ENCODE measurements at regions of chr1 and their contacts with region 1.

Region 1: DNA sequence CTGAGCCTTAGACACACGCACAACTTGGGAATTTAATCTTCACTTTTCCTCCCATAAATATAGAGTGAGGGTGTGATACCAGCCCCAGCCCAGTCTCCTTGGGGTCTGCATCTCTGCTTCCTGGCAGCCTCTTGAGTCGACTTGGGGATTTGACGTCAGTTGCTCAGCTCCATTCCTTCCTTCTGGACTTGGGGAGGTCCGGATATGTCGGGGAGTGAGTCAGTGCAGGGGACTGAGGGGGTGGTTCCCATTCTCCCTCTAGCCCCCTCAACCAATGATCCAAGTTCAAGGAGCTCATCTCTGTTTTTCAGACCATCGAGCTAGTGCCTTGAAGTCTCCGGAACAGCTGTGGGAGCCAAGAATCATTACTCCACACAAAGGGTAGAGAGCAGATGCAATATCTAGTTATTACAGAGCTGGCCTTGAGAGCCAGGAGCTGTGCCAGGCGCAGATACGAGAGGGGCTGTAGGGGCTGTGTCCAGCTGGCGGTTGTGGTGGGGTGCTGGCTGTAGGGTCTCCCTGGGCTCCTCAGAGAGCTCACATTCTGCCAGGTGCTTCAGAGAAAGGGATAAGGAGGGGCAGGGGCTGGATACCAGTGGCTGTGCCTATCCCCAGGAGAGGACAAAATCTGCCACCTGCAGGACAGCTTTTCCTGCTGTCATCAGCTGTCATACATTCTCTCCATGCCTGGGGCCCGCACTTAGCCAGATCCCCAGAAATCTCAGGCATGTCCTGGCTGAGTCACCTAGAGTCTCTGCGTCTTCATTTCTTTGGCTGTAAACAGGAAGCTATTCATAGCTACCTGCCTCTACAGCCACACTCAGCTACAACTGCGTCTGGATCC is 2.1 kb upstream of the KISS1 start:
- DNase-seq: peak; percentile 26 to 60 (median 42)
- H3K4me3 ChIP-seq: no peak overlapping the region
- H3K27ac ChIP-seq: peak overlapping the region in 1 of 2 donors; percentile 60
- H3K4me1 ChIP-seq: peaks cover 7% of the 10 kb centered on the region
- H3K27me3 ChIP-seq: no peaks in the 10 kb centered on the region
- CTCF ChIP-seq: no peak
- EP300 ChIP-seq: no peak
- POLR2A ChIP-seq: no peak

Region 2: GRCh38 chr1:204149635-204150565 is 48.5 kb before region 1 on chr1:
- intact Hi-C with region 1: loop called in 1 of 4 experiments (anchors 5 kb)
- DNase-seq: peak in 3 of 5 donors; percentile 37 to 53 (median 41)
- H3K4me3 ChIP-seq: no peak overlapping the region
- H3K27ac ChIP-seq: peak overlapping the region in 1 of 2 donors; percentile 83
- H3K4me1 ChIP-seq: peaks cover 10% of the 10 kb centered on the region
- H3K27me3 ChIP-seq: no peaks in the 10 kb centered on the region
- CTCF ChIP-seq: no peak
- EP300 ChIP-seq: no peak
- POLR2A ChIP-seq: no peak

Region 3: GRCh38 chr1:204171751-204172178 is 26.6 kb before region 1 on chr1:
- intact Hi-C with region 1: no loop called
- DNase-seq: no peak
- H3K4me3 ChIP-seq: no peak overlapping the region
- H3K27ac ChIP-seq: no peak overlapping the region
- H3K4me1 ChIP-seq: no peaks in the 10 kb centered on the region
- H3K27me3 ChIP-seq: no peaks in the 10 kb centered on the region
- CTCF ChIP-seq: no peak
- EP300 ChIP-seq: no peak
- POLR2A ChIP-seq: no peak

Region 4: DNA sequence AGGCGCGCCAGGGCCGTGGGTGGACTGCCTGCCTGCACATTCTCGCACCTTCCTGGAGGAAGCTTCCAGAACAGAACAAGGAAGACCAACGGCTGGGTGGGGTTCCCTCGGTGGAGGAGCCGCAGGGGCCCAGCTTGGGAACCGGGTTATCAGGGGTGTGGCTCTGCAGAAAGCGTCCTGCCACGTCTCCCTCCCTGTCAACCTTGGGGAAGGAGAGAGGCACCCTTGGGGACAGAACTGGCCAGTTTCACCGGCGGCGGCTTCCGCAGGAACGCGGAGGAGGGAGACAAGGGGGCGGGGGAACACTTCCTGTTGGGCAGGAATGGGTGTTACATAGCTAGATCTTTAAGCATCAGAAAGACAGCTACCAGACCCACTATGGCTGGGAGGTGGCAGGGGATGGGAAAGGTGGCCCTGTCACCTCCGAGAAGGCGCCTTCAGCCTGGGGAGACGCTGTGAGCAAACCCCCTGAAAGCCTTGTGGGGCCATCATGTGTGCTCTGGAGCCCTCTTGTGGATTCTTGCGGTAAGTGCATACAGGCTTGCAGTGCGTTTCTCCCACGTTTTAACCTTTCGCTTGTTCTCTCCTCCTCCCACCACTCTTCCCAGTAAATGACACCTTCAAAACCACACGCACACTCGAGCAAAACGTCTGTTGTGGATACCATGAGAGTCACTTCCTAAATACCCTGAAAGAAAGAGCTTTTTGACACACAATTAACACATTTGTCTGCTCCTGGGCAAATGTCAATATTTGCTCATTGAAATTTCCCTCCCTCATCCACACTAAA is 165.2 kb after region 1 on chr1:
- intact Hi-C with region 1: no loop called
- DNase-seq: peak; percentile 65 to 75 (median 74)
- H3K4me3 ChIP-seq: peak overlapping the region; percentile 23
- H3K27ac ChIP-seq: no peak overlapping the region
- H3K4me1 ChIP-seq: peaks cover 2% of the 10 kb centered on the region
- H3K27me3 ChIP-seq: no peaks in the 10 kb centered on the region
- CTCF ChIP-seq: peak; percentile 97 to 98 (median 97)
- EP300 ChIP-seq: no peak
- POLR2A ChIP-seq: peak; percentile 36